Calu3 (cell line): ENCODE measurements at regions of chr2 and their contacts with region 1.

Region 1: GRCh38 chr2:233705911-233706506 is 6.7 kb upstream of the UGT1A5 start:
- DNase-seq: peak; percentile 80
- H3K4me3 Mint-ChIP-seq: peak overlapping the region; percentile 8
- H3K27ac Mint-ChIP-seq: peak overlapping the region; percentile 65
- H3K4me1 Mint-ChIP-seq: peaks cover 93% of the 10 kb centered on the region
- H3K27me3 Mint-ChIP-seq: no peaks in the 10 kb centered on the region
- CTCF ChIP-seq: no peak

Region 2: GRCh38 chr2:233409286-233409991 is 296.6 kb before region 1 on chr2:
- CTCF ChIA-PET with region 1: no interaction called
- intact Hi-C with region 1: loop called (anchors 5 kb)
- DNase-seq: peak; percentile 57
- H3K4me3 Mint-ChIP-seq: no peak overlapping the region
- H3K27ac Mint-ChIP-seq: peak overlapping the region; percentile 25
- H3K4me1 Mint-ChIP-seq: peaks cover 55% of the 10 kb centered on the region
- H3K27me3 Mint-ChIP-seq: no peaks in the 10 kb centered on the region
- CTCF ChIP-seq: no peak

Region 3: GRCh38 chr2:233553366-233553765 is 152.6 kb before region 1 on chr2:
- CTCF ChIA-PET with region 1: no interaction called
- intact Hi-C with region 1: loop called (anchors 5 kb)
- DNase-seq: no peak
- H3K4me3 Mint-ChIP-seq: no peak overlapping the region
- H3K27ac Mint-ChIP-seq: no peak overlapping the region
- H3K4me1 Mint-ChIP-seq: peaks cover 24% of the 10 kb centered on the region
- H3K27me3 Mint-ChIP-seq: no peaks in the 10 kb centered on the region
- CTCF ChIP-seq: no peak

Region 4: DNA sequence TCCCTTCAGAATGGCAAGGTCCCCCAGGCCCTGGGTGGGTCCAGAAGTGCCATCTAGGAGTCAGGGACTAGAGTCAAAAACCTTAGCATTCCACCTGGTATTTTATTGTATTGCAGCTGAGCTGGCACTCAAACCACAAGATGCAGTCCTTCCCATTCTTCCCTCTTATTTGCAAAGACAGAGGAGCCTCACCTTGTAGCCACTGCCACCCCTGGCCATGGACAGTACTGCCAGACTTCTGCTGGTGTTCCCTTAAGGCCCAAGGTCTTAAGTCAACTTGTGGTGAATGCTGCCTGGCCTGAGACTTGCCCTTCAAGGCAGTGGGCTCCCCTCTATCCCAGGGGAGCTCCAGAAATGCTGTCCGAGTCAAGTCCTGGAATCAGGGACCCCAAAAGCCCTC is 62.9 kb before region 1 on chr2:
- CTCF ChIA-PET with region 1: no interaction called
- intact Hi-C with region 1: loop called (anchors 2 kb)
- DNase-seq: peak; percentile 63
- H3K4me3 Mint-ChIP-seq: no peak overlapping the region
- H3K27ac Mint-ChIP-seq: peak overlapping the region; percentile 18
- H3K4me1 Mint-ChIP-seq: peaks cover 42% of the 10 kb centered on the region
- H3K27me3 Mint-ChIP-seq: no peaks in the 10 kb centered on the region
- CTCF ChIP-seq: peak; percentile 53